Gastrocnemius medialis (tissue), 4 donors: ENCODE measurements at regions of chr7 and their contacts with region 1.

Region 1: DNA sequence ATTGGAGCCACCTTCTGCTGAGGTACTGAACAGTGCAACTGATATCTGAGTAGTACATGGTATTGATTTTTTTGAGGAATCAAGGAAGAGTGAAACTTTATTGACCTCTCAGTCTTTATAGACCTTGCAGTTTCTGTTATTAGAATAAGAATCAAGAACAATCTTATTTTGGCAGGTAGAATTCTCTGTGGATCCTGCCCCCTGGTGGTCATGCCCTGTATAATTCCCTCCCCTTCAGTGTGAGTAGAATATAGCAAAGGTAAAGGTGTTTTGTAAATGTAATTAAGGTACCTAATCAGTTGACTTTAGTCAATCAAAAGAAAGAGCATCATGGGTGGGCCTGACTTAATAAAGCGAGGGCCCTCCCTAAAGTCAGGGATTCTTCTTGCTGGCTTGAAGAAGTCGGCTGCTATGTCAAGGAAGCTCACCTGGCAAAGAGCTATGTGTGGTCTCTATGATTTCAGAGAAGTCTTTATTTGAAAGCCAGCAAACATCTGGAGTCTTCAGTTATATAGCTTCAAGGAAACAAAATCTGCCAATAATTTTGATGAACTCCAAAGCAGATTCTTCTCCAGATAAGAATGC is 142.8 kb downstream of the LSM5 start:
- DNase-seq: no peak
- ATAC-seq: no peak
- H3K4me3 ChIP-seq: no peak overlapping the region
- H3K27ac ChIP-seq: no peak overlapping the region
- H3K4me1 ChIP-seq: no peaks in the 10 kb centered on the region
- H3K27me3 ChIP-seq: no peaks in the 10 kb centered on the region
- CTCF ChIP-seq: peak in 4 of 5 experiments; percentile 10 to 54 (median 30)
- POLR2A ChIP-seq: no peak

Region 2: GRCh38 chr7:32204361-32205018 is 142.8 kb before region 1 on chr7:
- in situ Hi-C with region 1: no loop called
- intact Hi-C with region 1: loop called (anchors 10 kb)
- DNase-seq: no peak
- ATAC-seq: peak in 1 of 2 donors; percentile 41
- H3K4me3 ChIP-seq: peak overlapping the region in 1 of 4 donors; percentile 2
- H3K27ac ChIP-seq: no peak overlapping the region
- H3K4me1 ChIP-seq: no peaks in the 10 kb centered on the region
- H3K27me3 ChIP-seq: no peaks in the 10 kb centered on the region
- CTCF ChIP-seq: peak in 4 of 5 experiments; percentile 18 to 53 (median 46)
- POLR2A ChIP-seq: no peak

Region 3: DNA sequence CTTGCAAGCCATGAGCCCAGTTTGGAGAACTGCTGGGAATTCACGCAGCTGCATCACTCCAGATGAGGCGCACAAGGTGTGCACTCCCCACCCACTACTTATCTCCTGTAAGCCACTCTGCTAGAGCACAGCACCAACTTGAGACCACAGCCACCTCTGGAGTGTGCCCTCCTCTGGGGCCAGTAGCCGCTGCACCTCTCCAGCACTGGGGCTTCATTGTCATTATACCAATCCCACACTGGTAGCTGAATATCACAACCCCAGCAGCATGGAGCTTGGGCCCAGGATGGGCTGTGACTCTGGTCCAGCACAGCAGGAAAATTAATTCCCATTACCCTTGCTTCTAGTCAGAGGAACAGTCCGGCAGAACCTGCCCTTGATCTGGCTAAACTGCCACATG is 17.2 kb after region 1 on chr7:
- in situ Hi-C with region 1: no loop called
- intact Hi-C with region 1: no loop called
- DNase-seq: no peak
- ATAC-seq: no peak
- H3K4me3 ChIP-seq: no peak overlapping the region
- H3K27ac ChIP-seq: no peak overlapping the region
- H3K4me1 ChIP-seq: no peaks in the 10 kb centered on the region
- H3K27me3 ChIP-seq: peaks cover 0 to 2% (median 0%) of the 10 kb centered on the region in 3 donors
- CTCF ChIP-seq: no peak
- POLR2A ChIP-seq: no peak

Region 4: GRCh38 chr7:32378988-32379387 is 31.7 kb after region 1 on chr7:
- in situ Hi-C with region 1: no loop called
- intact Hi-C with region 1: no loop called
- DNase-seq: no peak
- ATAC-seq: no peak
- H3K4me3 ChIP-seq: no peak overlapping the region
- H3K27ac ChIP-seq: no peak overlapping the region
- H3K4me1 ChIP-seq: no peaks in the 10 kb centered on the region
- H3K27me3 ChIP-seq: peaks cover 0 to 6% (median 2%) of the 10 kb centered on the region in 3 donors
- CTCF ChIP-seq: no peak
- POLR2A ChIP-seq: no peak